ENCODE measurements at regions of chr14 and their contacts with region 1.

Region 1: GRCh38 chr14:105168979-105169507 is 467 bp upstream of the JAG2 start:
- DNase-seq: no peak
- H3K4me3 ChIP-seq: no peak overlapping the region
- CTCF ChIP-seq: no peak
- POLR2A ChIP-seq: no peak

Region 2: GRCh38 chr14:103705118-103705503 is 1463.9 kb before region 1 on chr14:
- intact Hi-C with region 1: no loop called
- DNase-seq: no peak
- H3K4me3 ChIP-seq: no peak overlapping the region
- CTCF ChIP-seq: no peak
- POLR2A ChIP-seq: no peak

Region 3: DNA sequence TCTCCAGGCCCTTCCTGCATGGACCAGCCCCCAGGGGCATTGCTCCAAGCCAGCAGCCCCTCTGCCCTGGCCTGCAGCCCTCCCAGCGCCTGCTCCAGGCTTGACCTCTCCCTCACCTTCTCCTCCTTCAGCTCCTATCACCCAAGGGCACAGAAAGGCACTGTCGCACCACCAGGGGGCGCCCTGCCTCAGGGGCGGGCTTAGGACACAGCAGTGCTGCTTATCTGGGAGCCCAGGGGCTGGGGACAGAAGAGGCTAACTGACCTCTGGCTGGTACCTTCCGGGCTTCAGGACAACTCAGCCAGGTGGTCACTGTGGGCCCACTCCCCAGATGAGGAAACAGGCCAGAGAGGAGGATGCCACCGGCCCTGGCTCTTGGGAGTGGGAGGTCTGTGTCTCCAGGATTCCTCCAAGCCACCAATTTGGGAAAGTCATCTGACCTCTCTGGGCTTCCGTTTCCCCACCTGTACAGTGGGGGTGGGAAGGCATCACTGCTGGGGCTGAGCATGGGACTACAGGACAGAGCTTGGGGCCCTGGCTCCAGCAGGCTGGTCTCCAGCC is 78.5 kb before region 1 on chr14:
- intact Hi-C with region 1: loop called (anchors 10 kb)
- DNase-seq: peak in 1 of 2 donors; percentile 97
- H3K4me3 ChIP-seq: no peak overlapping the region
- CTCF ChIP-seq: peak in 1 of 3 donors; percentile 65
- POLR2A ChIP-seq: no peak